CD4-positive, alpha-beta memory T cell (primary cell): ENCODE measurements at regions of chr1 and their contacts with region 1.

Region 1: DNA sequence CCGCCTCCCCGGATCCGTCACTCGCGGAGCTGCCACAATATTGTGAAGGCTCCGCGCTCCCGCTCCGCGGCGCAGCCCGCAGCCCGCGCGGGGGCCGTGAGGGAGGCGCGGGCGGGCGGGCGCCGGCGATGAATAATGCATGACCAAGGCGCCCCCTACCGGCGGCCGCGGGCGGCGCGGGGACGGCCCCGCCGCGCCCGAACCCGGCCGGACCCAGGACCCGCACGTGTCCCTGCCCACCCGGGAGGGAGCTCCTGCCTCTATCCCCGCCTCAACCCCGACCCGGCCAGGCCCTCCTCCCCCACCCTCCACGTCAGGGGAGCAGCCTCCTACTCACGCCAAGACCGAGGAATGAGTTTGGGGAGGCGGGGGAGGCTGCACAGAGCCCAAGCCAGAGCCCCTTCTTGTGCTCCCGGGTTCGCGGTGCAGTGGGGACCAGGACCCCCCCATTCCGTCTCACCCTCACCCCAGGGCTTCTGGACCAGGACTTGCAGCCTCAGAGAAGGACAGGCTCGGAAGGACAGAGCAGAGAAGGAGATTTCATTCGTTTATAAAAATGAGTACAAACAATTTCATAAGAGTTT is 70.8 kb upstream of the CASZ1 start:
- DNase-seq: peak; percentile 58 to 67 (median 61)
- H3K4me3 ChIP-seq: peak overlapping the region in 1 of 2 donors; percentile 34
- H3K4me3 Mint-ChIP-seq: peak overlapping the region in 4 of 8 donors; percentile 32 to 80 (median 67)
- H3K27ac ChIP-seq: no peak overlapping the region
- H3K27ac Mint-ChIP-seq: peak overlapping the region in 1 of 7 donors; percentile 29
- H3K4me1 ChIP-seq: peaks cover 13% of the 10 kb centered on the region
- H3K4me1 Mint-ChIP-seq: peaks cover 4 to 18% (median 12%) of the 10 kb centered on the region in 4 donors
- H3K27me3 ChIP-seq: peaks cover 25% of the 10 kb centered on the region
- H3K27me3 Mint-ChIP-seq: peaks cover 26 to 55% of the 10 kb centered on the region in 2 donors

Region 2: GRCh38 chr1:10451287-10451686 is 415.9 kb before region 1 on chr1:
- CTCF ChIA-PET with region 1: no interaction called
- POLR2A ChIA-PET with region 1: no interaction called
- intact Hi-C with region 1: no loop called
- DNase-seq: no peak
- H3K4me3 ChIP-seq: no peak overlapping the region
- H3K4me3 Mint-ChIP-seq: no peak overlapping the region
- H3K27ac ChIP-seq: no peak overlapping the region
- H3K27ac Mint-ChIP-seq: no peak overlapping the region
- H3K4me1 ChIP-seq: no peaks in the 10 kb centered on the region
- H3K4me1 Mint-ChIP-seq: peaks cover 0 to 2% (median 0%) of the 10 kb centered on the region in 4 donors
- H3K27me3 ChIP-seq: no peaks in the 10 kb centered on the region
- H3K27me3 Mint-ChIP-seq: no peaks in the 10 kb centered on the region

Region 3: GRCh38 chr1:10694633-10695627 is 172.3 kb before region 1 on chr1:
- CTCF ChIA-PET with region 1: interaction called, 4 read pairs
- POLR2A ChIA-PET with region 1: no interaction called
- intact Hi-C with region 1: loop called (anchors 1 kb)
- DNase-seq: peak; percentile 74 to 86 (median 81)
- H3K4me3 ChIP-seq: peak overlapping the region in 1 of 2 donors; percentile 41
- H3K4me3 Mint-ChIP-seq: peak overlapping the region; percentile 76 to 92 (median 84)
- H3K27ac ChIP-seq: peak overlapping the region; percentile 22
- H3K27ac Mint-ChIP-seq: peak overlapping the region in 6 of 7 donors; percentile 62 to 96 (median 84)
- H3K4me1 ChIP-seq: peaks cover 21% of the 10 kb centered on the region
- H3K4me1 Mint-ChIP-seq: peaks cover 10 to 33% (median 17%) of the 10 kb centered on the region in 4 donors
- H3K27me3 ChIP-seq: no peaks in the 10 kb centered on the region
- H3K27me3 Mint-ChIP-seq: peaks cover 0 to 1% of the 10 kb centered on the region in 2 donors